Lower leg skin (tissue), 4 donors: ENCODE measurements at regions of chr1 and their contacts with region 1.

Region 1: DNA sequence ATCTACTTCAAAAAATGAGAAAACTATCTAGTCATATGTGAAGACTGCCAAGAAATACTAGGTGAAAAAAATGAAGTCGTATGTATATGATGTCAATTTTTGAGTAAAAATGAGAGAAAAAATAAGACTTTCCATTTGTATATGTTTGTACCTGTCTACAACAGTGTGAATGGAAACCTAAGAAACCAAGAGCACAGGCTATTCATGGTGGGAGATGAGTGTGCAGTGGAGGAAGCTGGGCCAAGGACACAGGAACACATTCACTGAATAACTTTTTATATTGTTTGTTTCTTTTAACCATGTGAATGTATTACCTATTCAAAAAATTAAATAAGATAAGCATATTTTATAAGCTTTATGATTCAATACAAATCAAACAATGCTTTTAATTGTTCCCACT is 67.0 kb downstream of the ERO1B start:
- DNase-seq: no peak
- H3K4me3 ChIP-seq: no peak overlapping the region
- CTCF ChIP-seq: no peak
- POLR2A ChIP-seq: no peak

Region 2: DNA sequence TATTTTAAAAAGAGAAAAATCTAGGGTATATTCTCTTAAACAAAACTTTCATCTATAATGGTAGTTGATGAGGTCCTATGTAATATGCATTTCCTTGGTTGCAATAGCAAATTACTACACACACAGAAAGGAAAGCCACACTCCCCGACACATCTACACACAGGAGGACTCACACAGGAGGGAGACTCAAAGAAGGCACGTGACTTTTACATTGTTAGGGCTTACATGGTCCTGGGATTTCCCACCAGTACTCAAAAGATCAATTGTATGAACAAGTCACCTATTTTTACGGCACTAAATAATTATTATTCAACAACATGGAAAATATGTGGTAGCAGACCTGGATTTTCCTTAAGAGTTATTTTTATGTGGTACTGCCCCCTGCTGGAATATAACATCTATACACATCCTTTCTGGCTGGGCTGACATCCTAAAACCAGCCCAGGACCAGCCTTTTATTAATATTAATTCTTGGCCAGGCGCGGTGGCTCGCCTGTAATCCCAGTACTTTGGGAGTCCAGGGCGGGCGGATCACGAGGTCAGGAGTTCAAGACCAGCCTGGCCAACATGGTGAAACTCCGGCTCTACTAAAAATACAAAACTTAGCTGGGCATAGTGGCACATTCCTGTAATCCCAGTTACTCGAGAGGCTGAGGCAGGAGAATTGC is 275.1 kb after region 1 on chr1:
- intact Hi-C with region 1: no loop called
- DNase-seq: no peak
- H3K4me3 ChIP-seq: no peak overlapping the region
- CTCF ChIP-seq: no peak
- POLR2A ChIP-seq: no peak

Region 3: DNA sequence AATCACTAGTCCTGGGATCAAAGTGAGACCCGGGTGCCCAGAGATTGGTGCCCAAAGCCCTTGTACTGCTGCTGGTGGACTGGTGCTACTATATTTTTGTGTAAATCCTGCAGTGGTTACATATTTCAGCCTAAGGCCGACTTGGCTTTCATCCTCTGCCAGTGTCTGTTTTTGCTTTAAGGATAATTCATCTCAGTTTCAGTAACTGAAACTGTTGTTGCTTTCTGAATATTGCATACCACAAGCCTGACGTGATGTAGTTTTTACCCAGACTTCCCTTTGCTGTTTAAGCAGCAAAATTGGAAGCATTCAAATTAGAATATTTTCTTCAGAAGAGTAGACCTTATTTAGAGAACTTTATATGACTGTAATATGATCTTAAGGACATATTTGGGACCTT is 1169.0 kb after region 1 on chr1:
- intact Hi-C with region 1: loop called (anchors 10 kb)
- DNase-seq: no peak
- H3K4me3 ChIP-seq: no peak overlapping the region
- CTCF ChIP-seq: no peak
- POLR2A ChIP-seq: no peak